CD8-positive, alpha-beta T cell (primary cell): ENCODE measurements at regions of chr6 and their contacts with region 1.

Region 1: GRCh38 chr6:158972241-158973233 is 27.5 kb downstream of the RSPH3 start:
- DNase-seq: peak in 2 of 9 experiments; percentile 70 to 78
- ATAC-seq: peak; percentile 63
- H3K4me3 ChIP-seq: no peak overlapping the region
- H3K4me3 Mint-ChIP-seq: no peak overlapping the region
- H3K27ac ChIP-seq: no peak overlapping the region
- H3K27ac Mint-ChIP-seq: no peak overlapping the region
- H3K4me1 ChIP-seq: no peaks in the 10 kb centered on the region
- H3K4me1 Mint-ChIP-seq: no peaks in the 10 kb centered on the region
- H3K27me3 ChIP-seq: no peaks in the 10 kb centered on the region
- H3K27me3 Mint-ChIP-seq: no peaks in the 10 kb centered on the region
- CTCF ChIP-seq: peak; percentile 73

Region 2: DNA sequence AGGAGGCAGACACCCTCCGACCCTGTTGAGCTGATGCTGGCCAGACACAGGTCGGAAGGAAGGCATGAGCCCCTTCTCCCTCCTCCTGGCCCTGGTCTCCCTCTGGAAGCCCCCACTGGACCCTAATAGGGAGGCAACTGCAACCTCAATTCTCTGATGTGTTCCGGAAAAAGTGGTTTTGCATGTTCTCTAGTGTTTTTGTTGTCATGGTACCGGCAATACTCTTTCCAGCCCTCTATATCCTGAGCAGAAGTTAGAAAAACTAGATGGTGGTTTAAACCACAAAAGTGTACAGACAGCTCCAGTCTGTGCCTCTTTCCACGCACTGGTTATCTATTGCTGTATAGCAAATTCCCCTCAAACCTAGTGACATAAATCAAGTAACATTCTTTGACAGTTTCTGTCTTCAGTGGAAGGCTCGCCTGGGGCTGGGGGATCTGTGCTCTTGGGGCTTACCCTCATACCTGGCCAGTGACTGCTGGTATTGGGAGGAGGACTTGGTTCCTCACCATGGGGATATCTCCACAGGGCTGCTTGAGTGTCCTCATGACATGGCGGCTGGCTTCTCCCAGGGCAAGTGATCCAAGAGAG is 285.7 kb before region 1 on chr6:
- CTCF ChIA-PET with region 1: interaction called, 18 read pairs
- POLR2A ChIA-PET with region 1: no interaction called
- intact Hi-C with region 1: no loop called
- DNase-seq: peak in 8 of 9 experiments; percentile 29 to 94 (median 60)
- ATAC-seq: peak; percentile 88
- H3K4me3 ChIP-seq: peak overlapping the region; percentile 6 to 21
- H3K4me3 Mint-ChIP-seq: peak overlapping the region; percentile 73
- H3K27ac ChIP-seq: peak overlapping the region; percentile 75 to 79
- H3K27ac Mint-ChIP-seq: peak overlapping the region; percentile 97
- H3K4me1 ChIP-seq: peaks cover 48% of the 10 kb centered on the region
- H3K4me1 Mint-ChIP-seq: peaks cover 62% of the 10 kb centered on the region
- H3K27me3 ChIP-seq: no peaks in the 10 kb centered on the region
- H3K27me3 Mint-ChIP-seq: no peaks in the 10 kb centered on the region
- CTCF ChIP-seq: no peak

Region 3: GRCh38 chr6:158718461-158719046 is 254.0 kb before region 1 on chr6:
- CTCF ChIA-PET with region 1: interaction called, 7 read pairs
- POLR2A ChIA-PET with region 1: no interaction called
- intact Hi-C with region 1: loop called in 1 of 2 experiments (anchors 5 kb)
- DNase-seq: peak in 1 of 9 experiments; percentile 37
- ATAC-seq: no peak
- H3K4me3 ChIP-seq: no peak overlapping the region
- H3K4me3 Mint-ChIP-seq: no peak overlapping the region
- H3K27ac ChIP-seq: peak overlapping the region in 1 of 2 experiments; percentile 84
- H3K27ac Mint-ChIP-seq: peak overlapping the region; percentile 96
- H3K4me1 ChIP-seq: peaks cover 44% of the 10 kb centered on the region
- H3K4me1 Mint-ChIP-seq: peaks cover 56% of the 10 kb centered on the region
- H3K27me3 ChIP-seq: no peaks in the 10 kb centered on the region
- H3K27me3 Mint-ChIP-seq: no peaks in the 10 kb centered on the region
- CTCF ChIP-seq: no peak

Region 4: DNA sequence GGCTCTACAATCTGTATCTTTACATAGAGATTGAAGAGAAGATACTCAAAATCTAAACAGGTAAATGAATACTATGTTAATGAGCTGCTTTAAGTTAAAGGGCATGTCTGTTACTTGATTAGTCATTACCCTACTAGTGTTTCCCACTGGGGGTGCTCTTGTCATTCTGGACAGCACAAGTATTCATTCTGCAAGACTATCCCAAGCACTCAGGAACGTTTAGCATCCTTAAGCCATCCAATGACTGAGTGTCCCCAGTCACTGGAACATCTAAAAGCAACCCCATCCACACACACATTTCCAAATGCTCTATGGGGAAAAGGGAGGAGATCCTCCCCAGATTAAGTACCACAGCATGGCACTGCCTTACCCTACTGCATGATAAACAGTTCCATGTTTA is 179.1 kb before region 1 on chr6:
- CTCF ChIA-PET with region 1: interaction called, 79 read pairs
- POLR2A ChIA-PET with region 1: interaction called, 3 read pairs
- intact Hi-C with region 1: loop called (anchors 1 to 2 kb)
- DNase-seq: peak in 2 of 9 experiments; percentile 59 to 70
- ATAC-seq: peak; percentile 22
- H3K4me3 ChIP-seq: no peak overlapping the region
- H3K4me3 Mint-ChIP-seq: peak overlapping the region; percentile 32
- H3K27ac ChIP-seq: peak overlapping the region in 1 of 2 experiments; percentile 32
- H3K27ac Mint-ChIP-seq: peak overlapping the region; percentile 45
- H3K4me1 ChIP-seq: peaks cover 73% of the 10 kb centered on the region
- H3K4me1 Mint-ChIP-seq: peaks cover 81% of the 10 kb centered on the region
- H3K27me3 ChIP-seq: no peaks in the 10 kb centered on the region
- H3K27me3 Mint-ChIP-seq: no peaks in the 10 kb centered on the region
- CTCF ChIP-seq: peak; percentile 36

Region 5: GRCh38 chr6:158910484-158911348 is 61.8 kb before region 1 on chr6:
- CTCF ChIA-PET with region 1: interaction called, 5 read pairs
- POLR2A ChIA-PET with region 1: no interaction called
- intact Hi-C with region 1: loop called in 1 of 2 experiments (anchors 10 kb)
- DNase-seq: peak in 3 of 9 experiments; percentile 22 to 54 (median 25)
- ATAC-seq: peak; percentile 58
- H3K4me3 ChIP-seq: peak overlapping the region; percentile 23 to 33
- H3K4me3 Mint-ChIP-seq: peak overlapping the region; percentile 72
- H3K27ac ChIP-seq: peak overlapping the region in 1 of 2 experiments; percentile 17
- H3K27ac Mint-ChIP-seq: peak overlapping the region; percentile 80
- H3K4me1 ChIP-seq: peaks cover 31% of the 10 kb centered on the region
- H3K4me1 Mint-ChIP-seq: peaks cover 45% of the 10 kb centered on the region
- H3K27me3 ChIP-seq: no peaks in the 10 kb centered on the region
- H3K27me3 Mint-ChIP-seq: no peaks in the 10 kb centered on the region
- CTCF ChIP-seq: no peak

Region 6: GRCh38 chr6:159023893-159024292 is 51.4 kb after region 1 on chr6:
- CTCF ChIA-PET with region 1: no interaction called
- POLR2A ChIA-PET with region 1: no interaction called
- intact Hi-C with region 1: no loop called
- DNase-seq: peak in 2 of 9 experiments; percentile 44 to 56
- ATAC-seq: peak; percentile 23
- H3K4me3 ChIP-seq: no peak overlapping the region
- H3K4me3 Mint-ChIP-seq: no peak overlapping the region
- H3K27ac ChIP-seq: no peak overlapping the region
- H3K27ac Mint-ChIP-seq: peak overlapping the region; percentile 35
- H3K4me1 ChIP-seq: peaks cover 3% of the 10 kb centered on the region
- H3K4me1 Mint-ChIP-seq: peaks cover 7% of the 10 kb centered on the region
- H3K27me3 ChIP-seq: no peaks in the 10 kb centered on the region
- H3K27me3 Mint-ChIP-seq: no peaks in the 10 kb centered on the region
- CTCF ChIP-seq: no peak

Region 7: GRCh38 chr6:159161839-159162238 is 189.3 kb after region 1 on chr6:
- CTCF ChIA-PET with region 1: no interaction called
- POLR2A ChIA-PET with region 1: no interaction called
- intact Hi-C with region 1: no loop called
- DNase-seq: no peak
- ATAC-seq: no peak
- H3K4me3 ChIP-seq: no peak overlapping the region
- H3K4me3 Mint-ChIP-seq: no peak overlapping the region
- H3K27ac ChIP-seq: no peak overlapping the region
- H3K27ac Mint-ChIP-seq: no peak overlapping the region
- H3K4me1 ChIP-seq: no peaks in the 10 kb centered on the region
- H3K4me1 Mint-ChIP-seq: no peaks in the 10 kb centered on the region
- H3K27me3 ChIP-seq: no peaks in the 10 kb centered on the region
- H3K27me3 Mint-ChIP-seq: peaks cover 36% of the 10 kb centered on the region
- CTCF ChIP-seq: no peak